Naive thymus-derived CD4-positive, alpha-beta T cell (primary cell): ENCODE measurements at regions of chr12 and their contacts with region 1.

Region 1: GRCh38 chr12:45728630-45729232 is 775 bp upstream of the ARID2 start:
- DNase-seq: peak; percentile 95 to 99 (median 98)
- ATAC-seq: peak; percentile 85
- H3K4me3 ChIP-seq: peak overlapping the region; percentile 91
- H3K4me3 Mint-ChIP-seq: peak overlapping the region; percentile 85 to 100 (median 98)
- H3K27ac ChIP-seq: peak overlapping the region; percentile 96
- H3K27ac Mint-ChIP-seq: peak overlapping the region; percentile 82 to 99 (median 99)
- H3K4me1 ChIP-seq: peaks cover 10 to 31% of the 10 kb centered on the region in 2 donors
- H3K4me1 Mint-ChIP-seq: peaks cover 13 to 39% (median 30%) of the 10 kb centered on the region in 7 donors
- H3K27me3 ChIP-seq: no peaks in the 10 kb centered on the region
- H3K27me3 Mint-ChIP-seq: no peaks in the 10 kb centered on the region

Region 2: DNA sequence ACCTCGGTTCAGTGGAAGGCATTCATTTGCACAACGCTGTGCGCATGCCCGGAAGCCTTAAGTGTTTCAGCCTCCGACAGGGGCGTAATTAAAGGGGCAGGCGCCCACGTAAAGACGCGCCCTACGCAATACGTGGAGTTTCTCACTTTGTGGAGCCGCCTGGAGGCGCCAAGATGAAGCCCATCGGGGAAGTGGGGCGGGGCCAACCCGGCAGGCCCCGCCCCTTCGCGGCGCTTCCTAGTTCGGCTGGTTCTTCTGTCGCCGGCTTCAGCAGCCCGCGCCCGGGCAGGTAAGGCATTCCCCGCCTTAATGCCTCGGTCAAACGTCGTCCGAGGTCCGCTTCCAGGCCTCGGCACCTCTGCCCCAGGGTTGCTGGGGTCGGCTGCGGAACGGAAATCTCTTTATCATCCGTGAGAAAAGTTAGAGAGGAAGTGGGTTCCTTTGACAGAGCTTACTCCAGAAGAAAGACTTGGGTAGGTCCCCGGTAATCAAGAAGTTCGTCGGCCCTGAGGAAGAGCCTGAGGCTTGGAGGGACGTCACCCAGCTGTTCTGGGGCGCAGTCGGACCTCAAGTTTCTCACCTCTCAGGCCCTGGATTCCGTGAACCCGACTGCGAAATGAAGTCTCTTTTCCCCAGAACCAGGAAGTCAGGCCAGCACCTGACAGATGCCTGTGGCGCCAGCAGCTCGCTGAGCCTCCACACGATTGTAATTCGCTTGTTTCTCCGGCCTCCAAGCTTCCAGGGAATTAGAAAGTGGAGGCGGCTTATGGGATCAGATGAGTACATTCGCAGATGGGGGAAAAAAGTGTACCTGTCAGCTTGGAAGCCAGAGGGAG is 1969.8 kb before region 1 on chr12 and contains the starts of genes IRAK4 and PUS7L:
- CTCF ChIA-PET with region 1: no interaction called
- POLR2A ChIA-PET with region 1: no interaction called
- intact Hi-C with region 1: loop called (anchors 2 to 5 kb)
- DNase-seq: peak; percentile 83 to 95 (median 92)
- ATAC-seq: peak; percentile 99
- H3K4me3 ChIP-seq: peak within 1 kb of the TSS; percentile 78
- H3K4me3 Mint-ChIP-seq: peak within 1 kb of the TSS; percentile 88 to 99 (median 97)
- H3K27ac ChIP-seq: peak within 1 kb of the TSS; percentile 86
- H3K27ac Mint-ChIP-seq: peak within 1 kb of the TSS; percentile 84 to 99 (median 99)
- H3K4me1 ChIP-seq: peaks cover 41 to 42% of the 10 kb centered on the region in 2 donors
- H3K4me1 Mint-ChIP-seq: peaks cover 52 to 89% (median 85%) of the 10 kb centered on the region in 7 donors
- H3K27me3 ChIP-seq: no peaks in the 10 kb centered on the region
- H3K27me3 Mint-ChIP-seq: no peaks in the 10 kb centered on the region
- total RNA-seq, gene IRAK4: 35.6 to 69.1 (median 52.7) TPM
- total RNA-seq, gene PUS7L: 14.0 to 27.4 (median 23.2) TPM

Region 3: GRCh38 chr12:44847888-44848702 is 880.6 kb before region 1 on chr12:
- CTCF ChIA-PET with region 1: no interaction called
- POLR2A ChIA-PET with region 1: no interaction called
- intact Hi-C with region 1: loop called (anchors 5 to 10 kb)
- DNase-seq: peak; percentile 29 to 86 (median 79)
- ATAC-seq: peak; percentile 93
- H3K4me3 ChIP-seq: peak overlapping the region; percentile 30
- H3K4me3 Mint-ChIP-seq: peak overlapping the region; percentile 65 to 84 (median 78)
- H3K27ac ChIP-seq: peak overlapping the region; percentile 62
- H3K27ac Mint-ChIP-seq: peak overlapping the region; percentile 90 to 99 (median 97)
- H3K4me1 ChIP-seq: peaks cover 67 to 77% of the 10 kb centered on the region in 2 donors
- H3K4me1 Mint-ChIP-seq: peaks cover 27 to 95% (median 84%) of the 10 kb centered on the region in 7 donors
- H3K27me3 ChIP-seq: no peaks in the 10 kb centered on the region
- H3K27me3 Mint-ChIP-seq: no peaks in the 10 kb centered on the region

Region 4: GRCh38 chr12:45518291-45519235 is 210.2 kb before region 1 on chr12:
- CTCF ChIA-PET with region 1: no interaction called
- POLR2A ChIA-PET with region 1: no interaction called
- intact Hi-C with region 1: loop called (anchors 1 kb)
- DNase-seq: peak in 8 of 9 donors; percentile 31 to 65 (median 49)
- ATAC-seq: peak; percentile 98
- H3K4me3 ChIP-seq: peak overlapping the region; percentile 3
- H3K4me3 Mint-ChIP-seq: peak overlapping the region; percentile 27 to 72 (median 54)
- H3K27ac ChIP-seq: peak overlapping the region; percentile 27
- H3K27ac Mint-ChIP-seq: peak overlapping the region; percentile 29 to 90 (median 79)
- H3K4me1 ChIP-seq: peaks cover 0 to 11% of the 10 kb centered on the region in 2 donors
- H3K4me1 Mint-ChIP-seq: peaks cover 11 to 21% (median 16%) of the 10 kb centered on the region in 7 donors
- H3K27me3 ChIP-seq: no peaks in the 10 kb centered on the region
- H3K27me3 Mint-ChIP-seq: no peaks in the 10 kb centered on the region

Region 5: GRCh38 chr12:45670346-45671065 is 58.2 kb before region 1 on chr12:
- CTCF ChIA-PET with region 1: interaction called, 13 read pairs
- POLR2A ChIA-PET with region 1: interaction called, 44 read pairs
- intact Hi-C with region 1: loop called (anchors 1 kb)
- DNase-seq: peak in 7 of 9 donors; percentile 36 to 65 (median 47)
- ATAC-seq: peak; percentile 79
- H3K4me3 ChIP-seq: no peak overlapping the region
- H3K4me3 Mint-ChIP-seq: peak overlapping the region; percentile 3 to 76 (median 53)
- H3K27ac ChIP-seq: no peak overlapping the region
- H3K27ac Mint-ChIP-seq: peak overlapping the region in 2 of 9 donors; percentile 0 to 19
- H3K4me1 ChIP-seq: peaks cover 25 to 30% of the 10 kb centered on the region in 2 donors
- H3K4me1 Mint-ChIP-seq: peaks cover 13 to 39% (median 28%) of the 10 kb centered on the region in 7 donors
- H3K27me3 ChIP-seq: no peaks in the 10 kb centered on the region
- H3K27me3 Mint-ChIP-seq: peaks cover 0 to 7% (median 0%) of the 10 kb centered on the region in 5 donors

Region 6: DNA sequence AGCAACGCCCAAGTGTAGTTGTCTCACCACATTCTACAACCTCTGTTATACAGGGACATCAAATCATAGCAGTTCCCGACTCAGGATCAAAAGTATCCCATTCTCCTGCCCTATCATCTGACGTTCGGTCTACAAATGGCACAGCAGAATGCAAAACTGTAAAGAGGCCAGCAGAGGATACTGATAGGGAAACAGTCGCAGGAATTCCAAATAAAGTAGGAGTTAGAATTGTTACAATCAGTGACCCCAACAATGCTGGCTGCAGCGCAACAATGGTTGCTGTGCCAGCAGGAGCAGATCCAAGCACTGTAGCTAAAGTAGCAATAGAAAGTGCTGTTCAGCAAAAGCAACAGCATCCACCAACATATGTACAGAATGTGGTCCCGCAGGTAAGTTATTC is 123.8 kb after region 1 on chr12:
- CTCF ChIA-PET with region 1: no interaction called
- POLR2A ChIA-PET with region 1: no interaction called
- intact Hi-C with region 1: no loop called
- DNase-seq: no peak
- ATAC-seq: no peak
- H3K4me3 ChIP-seq: no peak overlapping the region
- H3K4me3 Mint-ChIP-seq: no peak overlapping the region
- H3K27ac ChIP-seq: no peak overlapping the region
- H3K27ac Mint-ChIP-seq: no peak overlapping the region
- H3K4me1 ChIP-seq: no peaks in the 10 kb centered on the region
- H3K4me1 Mint-ChIP-seq: peaks cover 0 to 5% (median 0%) of the 10 kb centered on the region in 7 donors
- H3K27me3 ChIP-seq: no peaks in the 10 kb centered on the region
- H3K27me3 Mint-ChIP-seq: no peaks in the 10 kb centered on the region

Region 7: DNA sequence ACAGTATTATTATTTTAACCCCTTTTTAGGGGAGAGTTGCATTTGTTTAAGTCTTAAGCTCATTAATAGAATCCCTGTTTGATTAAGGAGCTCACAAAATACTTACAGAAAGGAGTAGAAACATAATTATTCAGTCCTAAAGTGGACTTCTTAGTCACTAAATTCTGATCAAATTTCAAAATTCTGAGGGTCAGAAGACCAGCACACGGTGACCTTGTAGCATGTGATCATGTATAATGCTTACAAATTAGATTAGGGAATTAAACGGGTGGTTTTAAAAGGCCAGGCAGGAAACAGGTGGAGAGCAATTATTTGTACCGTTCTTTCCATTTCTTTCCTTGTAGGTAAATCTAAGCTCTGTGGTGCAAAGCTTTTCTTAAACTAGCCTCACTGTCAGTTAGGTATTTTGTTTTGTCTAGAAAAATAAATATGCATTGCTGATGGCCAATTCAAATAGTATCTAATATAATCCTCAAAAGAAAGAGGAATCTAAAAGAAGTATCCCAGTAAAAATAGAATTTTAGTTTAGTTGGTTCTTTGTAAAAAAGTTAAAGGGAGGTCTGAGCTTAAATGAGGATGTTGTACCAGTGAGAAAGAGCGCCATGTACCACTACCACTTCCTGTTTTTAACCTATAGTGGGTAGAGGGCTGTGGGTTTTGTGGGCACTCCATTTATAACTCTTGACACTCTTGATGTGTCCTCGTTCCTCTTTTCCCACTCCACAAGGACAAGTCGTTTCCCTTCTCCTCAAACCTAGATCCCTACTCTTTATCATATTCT is 489.0 kb after region 1 on chr12:
- CTCF ChIA-PET with region 1: no interaction called
- POLR2A ChIA-PET with region 1: interaction called, 3 read pairs
- intact Hi-C with region 1: loop called in 1 of 2 experiments (anchors 2 kb)
- DNase-seq: peak in 8 of 9 donors; percentile 58 to 87 (median 84)
- ATAC-seq: peak; percentile 54
- H3K4me3 ChIP-seq: peak overlapping the region; percentile 41
- H3K4me3 Mint-ChIP-seq: peak overlapping the region; percentile 74 to 89 (median 81)
- H3K27ac ChIP-seq: peak overlapping the region; percentile 78
- H3K27ac Mint-ChIP-seq: peak overlapping the region; percentile 89 to 100 (median 99)
- H3K4me1 ChIP-seq: peaks cover 95% of the 10 kb centered on the region in 2 donors
- H3K4me1 Mint-ChIP-seq: peaks cover 69 to 100% (median 98%) of the 10 kb centered on the region in 7 donors
- H3K27me3 ChIP-seq: no peaks in the 10 kb centered on the region
- H3K27me3 Mint-ChIP-seq: no peaks in the 10 kb centered on the region

Region 8: GRCh38 chr12:47216150-47216677 is 1487.5 kb after region 1 on chr12:
- CTCF ChIA-PET with region 1: no interaction called
- POLR2A ChIA-PET with region 1: no interaction called
- intact Hi-C with region 1: loop called (anchors 5 kb)
- DNase-seq: peak in 8 of 9 donors; percentile 56 to 82 (median 72)
- ATAC-seq: peak; percentile 81
- H3K4me3 ChIP-seq: peak overlapping the region; percentile 80
- H3K4me3 Mint-ChIP-seq: peak overlapping the region; percentile 91 to 100 (median 98)
- H3K27ac ChIP-seq: peak overlapping the region; percentile 76
- H3K27ac Mint-ChIP-seq: peak overlapping the region; percentile 91 to 98 (median 96)
- H3K4me1 ChIP-seq: peaks cover 9 to 14% of the 10 kb centered on the region in 2 donors
- H3K4me1 Mint-ChIP-seq: peaks cover 6 to 52% (median 26%) of the 10 kb centered on the region in 7 donors
- H3K27me3 ChIP-seq: no peaks in the 10 kb centered on the region
- H3K27me3 Mint-ChIP-seq: peaks cover 0 to 4% (median 0%) of the 10 kb centered on the region in 5 donors